ENCODE measurements at regions of chr5 and their contacts with region 1.

Region 1: GRCh38 chr5:168706655-168707069 is 127.5 kb upstream of the PANK3 start:
- DNase-seq: no peak
- H3K4me3 Mint-ChIP-seq: no peak overlapping the region
- H3K27ac Mint-ChIP-seq: no peak overlapping the region
- H3K4me1 Mint-ChIP-seq: no peaks in the 10 kb centered on the region
- H3K27me3 Mint-ChIP-seq: no peaks in the 10 kb centered on the region

Region 2: DNA sequence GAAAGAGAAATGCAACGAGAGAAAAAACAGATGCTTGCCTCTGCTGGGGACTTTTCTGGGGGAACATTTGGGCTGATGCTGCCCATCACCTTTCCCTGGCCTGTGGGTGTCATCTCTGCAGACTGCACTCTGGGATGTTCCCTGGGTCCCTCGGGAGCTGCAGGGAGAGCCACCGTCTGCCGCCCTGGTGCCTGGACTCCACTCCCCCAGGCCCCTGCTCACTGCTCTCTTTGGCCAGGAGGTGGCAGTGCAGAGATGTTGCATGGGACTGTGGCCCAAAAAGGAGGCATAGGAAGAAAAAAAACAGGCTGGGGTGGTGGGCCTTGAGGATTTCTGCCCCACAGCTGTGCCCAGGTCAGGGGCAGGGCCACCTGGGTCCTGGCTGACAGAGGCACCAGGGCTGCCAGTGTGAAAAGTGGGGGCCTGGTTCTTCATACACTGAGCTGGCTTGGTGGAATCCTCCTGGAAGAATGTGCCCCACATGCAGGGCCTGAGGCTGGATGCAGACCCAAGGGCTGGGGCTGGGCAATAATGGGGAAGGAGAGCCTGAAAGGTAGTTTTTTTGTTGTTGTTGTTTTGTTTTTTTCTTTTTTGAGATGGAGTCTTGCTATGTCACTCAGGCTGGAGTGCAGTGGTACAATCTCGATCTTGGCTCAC is 240.7 kb after region 1 on chr5:
- intact Hi-C with region 1: loop called (anchors 1 kb)
- DNase-seq: no peak
- H3K4me3 Mint-ChIP-seq: no peak overlapping the region
- H3K27ac Mint-ChIP-seq: no peak overlapping the region
- H3K4me1 Mint-ChIP-seq: peaks cover 8% of the 10 kb centered on the region
- H3K27me3 Mint-ChIP-seq: no peaks in the 10 kb centered on the region

Region 3: DNA sequence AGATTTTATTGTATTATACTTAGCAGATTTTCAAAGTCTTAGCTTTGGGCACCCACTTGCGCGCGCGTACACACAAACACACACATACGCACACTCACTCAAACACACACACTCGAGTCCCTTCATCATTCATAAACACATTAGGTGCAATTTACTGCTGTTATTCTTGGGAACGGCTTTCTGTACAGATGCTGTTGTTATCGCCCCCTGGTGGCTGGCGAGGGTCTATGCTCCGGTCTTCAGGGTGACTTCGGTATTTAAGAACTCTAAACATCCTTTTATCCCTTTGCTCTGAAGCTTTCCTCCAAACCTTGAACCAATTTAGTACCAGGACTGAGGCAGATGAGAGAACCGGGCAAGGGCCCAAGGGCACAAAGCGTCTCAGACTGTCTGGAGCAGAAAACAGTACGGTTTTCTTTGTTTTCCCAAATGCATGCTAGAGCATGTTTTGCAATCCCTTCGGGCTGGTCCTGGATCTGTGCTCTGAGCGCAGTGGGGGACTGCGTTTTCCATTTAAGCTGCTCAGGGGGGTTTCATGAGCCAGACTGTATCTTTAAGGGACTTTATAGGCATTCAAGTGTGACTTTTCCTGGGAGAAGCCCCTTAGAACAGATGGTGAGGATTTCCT is 595.9 kb after region 1 on chr5:
- intact Hi-C with region 1: loop called (anchors 1 kb)
- DNase-seq: peak; percentile 15
- H3K4me3 Mint-ChIP-seq: no peak overlapping the region
- H3K27ac Mint-ChIP-seq: no peak overlapping the region
- H3K4me1 Mint-ChIP-seq: peaks cover 9% of the 10 kb centered on the region
- H3K27me3 Mint-ChIP-seq: peaks cover 42% of the 10 kb centered on the region

Measured in activated T-helper 1 cell treated with anti-CD3 and anti-CD28 coated beads, Interleukin-12 subunit alpha, Interleukin-12 subunit beta, Interleukin-2, Interleukin-4 antibody, amounts not matched to agents 30 ng/mL and 10 ng/mL and 1 ng/mL, durations not matched to agents 14 hours and 24 hours and 36 hours (primary cell).